CD8-positive, alpha-beta T cell (primary cell): ENCODE measurements at regions of chr16 and their contacts with region 1.

Region 1: DNA sequence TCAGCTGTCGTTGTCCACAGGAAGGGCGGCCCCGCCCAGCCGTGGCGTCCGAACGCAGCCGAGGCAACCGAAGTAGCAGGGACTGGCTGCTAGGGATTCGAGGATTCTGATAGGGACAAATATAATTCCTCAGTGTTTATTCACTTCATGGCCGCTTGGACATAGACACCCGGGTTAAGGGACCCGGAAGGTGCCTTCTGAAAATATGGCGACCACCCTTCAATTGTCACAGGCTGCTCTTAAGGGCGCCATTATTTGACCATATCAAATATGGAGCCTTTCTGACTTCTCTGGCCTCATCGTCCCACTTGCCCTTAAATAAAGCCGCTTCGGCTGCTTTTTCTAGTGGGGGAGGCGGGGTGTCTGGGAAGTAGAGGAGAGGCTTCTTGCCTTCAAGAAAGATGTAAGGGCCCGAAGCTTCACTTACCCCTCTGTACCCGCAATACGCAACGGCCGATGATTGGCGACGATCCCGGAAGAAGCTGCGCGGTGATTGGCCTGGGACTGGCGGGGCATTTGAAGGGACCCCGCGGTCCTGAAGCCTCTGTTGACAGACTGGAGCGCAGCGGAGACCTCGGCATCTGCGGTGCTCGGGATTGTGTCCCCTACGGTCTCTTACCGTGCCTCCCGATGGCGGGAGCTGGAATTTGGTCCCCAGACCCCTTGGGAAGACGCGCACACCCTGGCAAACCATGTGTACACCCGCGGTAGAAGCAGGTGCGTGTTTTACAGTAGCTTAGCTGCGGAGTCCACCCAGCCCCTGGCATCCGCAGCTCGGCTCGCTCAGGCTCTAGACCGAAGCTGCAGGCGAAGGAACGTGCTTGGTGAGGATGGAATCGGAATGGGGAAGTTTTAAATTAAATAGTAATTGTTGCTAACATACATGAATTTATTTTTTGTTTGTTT is at the start of gene ZNF688:
- DNase-seq: peak; percentile 89 to 99 (median 94)
- ATAC-seq: peak; percentile 81
- H3K4me3 ChIP-seq: peak within 1 kb of the TSS; percentile 85 to 86
- H3K4me3 Mint-ChIP-seq: peak within 1 kb of the TSS; percentile 90
- H3K27ac ChIP-seq: peak within 1 kb of the TSS; percentile 84 to 94
- H3K27ac Mint-ChIP-seq: peak within 1 kb of the TSS; percentile 98
- H3K4me1 ChIP-seq: peaks cover 40% of the 10 kb centered on the region
- H3K4me1 Mint-ChIP-seq: peaks cover 34% of the 10 kb centered on the region
- H3K27me3 ChIP-seq: no peaks in the 10 kb centered on the region
- H3K27me3 Mint-ChIP-seq: no peaks in the 10 kb centered on the region
- CTCF ChIP-seq: no peak
- total RNA-seq, gene ZNF688: 6.1 to 7.1 TPM

Region 2: GRCh38 chr16:30065143-30065850 is 506.7 kb before region 1 on chr16 and contains the start of gene ALDOA:
- CTCF ChIA-PET with region 1: no interaction called
- POLR2A ChIA-PET with region 1: no interaction called
- intact Hi-C with region 1: loop called in 1 of 2 experiments (anchors 1 kb)
- DNase-seq: peak; percentile 82 to 97 (median 94)
- ATAC-seq: peak; percentile 82
- H3K4me3 ChIP-seq: peak within 1 kb of the TSS; percentile 94 to 99
- H3K4me3 Mint-ChIP-seq: peak within 1 kb of the TSS; percentile 98
- H3K27ac ChIP-seq: peak within 1 kb of the TSS; percentile 87 to 94
- H3K27ac Mint-ChIP-seq: peak within 1 kb of the TSS; percentile 98
- H3K4me1 ChIP-seq: peaks cover 48% of the 10 kb centered on the region
- H3K4me1 Mint-ChIP-seq: peaks cover 43% of the 10 kb centered on the region
- H3K27me3 ChIP-seq: no peaks in the 10 kb centered on the region
- H3K27me3 Mint-ChIP-seq: no peaks in the 10 kb centered on the region
- CTCF ChIP-seq: no peak
- total RNA-seq, gene ALDOA: 339 to 359 TPM

Region 3: DNA sequence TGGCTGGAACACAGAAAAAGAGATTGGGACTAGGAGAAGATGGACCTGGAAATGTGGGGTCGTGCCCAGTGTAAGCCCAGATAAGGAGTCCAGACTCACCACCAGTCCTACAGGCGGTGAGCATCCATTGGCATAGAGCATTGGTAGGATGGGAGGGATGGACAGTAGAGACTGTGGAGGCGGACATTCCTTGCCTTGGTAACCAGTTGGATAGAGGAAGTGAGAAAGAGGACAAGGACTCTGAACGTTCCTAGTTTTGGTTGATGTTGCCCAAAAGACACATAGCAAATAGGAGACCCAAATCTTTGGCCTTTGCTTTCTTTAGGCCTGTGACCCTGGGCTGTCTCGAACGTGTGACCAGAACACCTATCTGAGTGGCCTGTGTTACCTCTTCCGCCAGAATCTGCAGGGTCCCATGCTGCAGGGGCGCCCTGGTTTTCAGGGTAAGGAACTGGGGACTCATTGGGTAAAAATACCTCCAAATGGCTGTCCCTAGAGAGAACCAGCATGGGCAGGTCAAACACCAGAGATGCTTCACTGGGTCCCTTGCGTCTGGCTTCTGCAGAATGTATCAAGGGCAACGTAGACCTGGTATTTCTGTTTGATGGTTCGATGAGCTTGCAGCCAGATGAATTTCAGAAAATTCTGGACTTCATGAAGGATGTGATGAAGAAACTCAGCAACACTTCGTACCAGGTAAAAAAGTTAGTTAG is 93.0 kb before region 1 on chr16:
- CTCF ChIA-PET with region 1: no interaction called
- POLR2A ChIA-PET with region 1: no interaction called
- intact Hi-C with region 1: no loop called
- DNase-seq: no peak
- ATAC-seq: no peak
- H3K4me3 ChIP-seq: no peak overlapping the region
- H3K4me3 Mint-ChIP-seq: peak overlapping the region; percentile 50
- H3K27ac ChIP-seq: peak overlapping the region in 1 of 2 experiments; percentile 31
- H3K27ac Mint-ChIP-seq: peak overlapping the region; percentile 90
- H3K4me1 ChIP-seq: peaks cover 47% of the 10 kb centered on the region
- H3K4me1 Mint-ChIP-seq: peaks cover 60% of the 10 kb centered on the region
- H3K27me3 ChIP-seq: no peaks in the 10 kb centered on the region
- H3K27me3 Mint-ChIP-seq: no peaks in the 10 kb centered on the region
- CTCF ChIP-seq: no peak

Region 4: DNA sequence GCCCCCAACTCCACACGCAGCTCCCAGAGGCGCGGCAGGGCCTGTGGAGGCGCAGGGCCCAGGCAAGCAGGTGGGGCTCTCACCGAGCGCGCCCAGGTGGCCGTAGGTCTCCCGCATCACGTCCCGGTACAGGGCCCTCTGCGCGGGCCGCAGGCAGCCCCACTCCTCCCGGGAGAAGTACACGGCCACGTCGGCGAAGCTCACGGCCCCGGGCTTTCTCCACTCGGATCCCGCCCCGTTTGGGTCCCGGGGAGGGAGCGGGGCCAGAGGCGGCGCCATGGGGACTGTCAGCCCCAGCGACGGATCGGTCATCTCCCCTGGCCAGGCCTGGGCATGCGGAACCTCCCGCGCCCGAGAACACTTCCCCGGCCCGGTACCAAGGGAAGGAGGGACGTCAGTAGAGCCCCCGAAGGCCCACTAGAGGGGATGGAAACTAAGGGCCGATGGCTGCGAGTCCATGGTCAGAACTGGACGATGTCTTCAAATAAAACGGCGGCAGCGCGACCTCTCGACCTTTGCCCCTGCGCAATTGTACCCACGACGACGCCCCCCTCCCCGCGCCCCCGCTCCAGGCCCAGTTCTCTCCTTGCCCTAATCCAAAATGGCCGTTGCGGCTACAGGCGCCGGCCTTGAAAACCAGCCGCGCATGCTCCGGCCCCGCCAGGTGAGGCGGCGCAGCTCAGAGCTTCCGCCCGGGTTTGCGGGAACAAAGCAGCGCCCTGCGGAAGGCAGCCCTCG is 37.4 kb before region 1 on chr16 and contains the start of gene ZNF747:
- CTCF ChIA-PET with region 1: interaction called, 7 read pairs
- POLR2A ChIA-PET with region 1: interaction called, 32 read pairs
- intact Hi-C with region 1: loop called (anchors 1 kb)
- DNase-seq: peak; percentile 77 to 95 (median 92)
- ATAC-seq: peak; percentile 80
- H3K4me3 ChIP-seq: peak within 1 kb of the TSS; percentile 82 to 96
- H3K4me3 Mint-ChIP-seq: peak within 1 kb of the TSS; percentile 89
- H3K27ac ChIP-seq: peak within 1 kb of the TSS; percentile 77 to 97
- H3K27ac Mint-ChIP-seq: peak within 1 kb of the TSS; percentile 96
- H3K4me1 ChIP-seq: peaks cover 13% of the 10 kb centered on the region
- H3K4me1 Mint-ChIP-seq: peaks cover 38% of the 10 kb centered on the region
- H3K27me3 ChIP-seq: no peaks in the 10 kb centered on the region
- H3K27me3 Mint-ChIP-seq: no peaks in the 10 kb centered on the region
- CTCF ChIP-seq: no peak
- total RNA-seq, gene ZNF747: 6.2 to 6.3 TPM

Region 5: DNA sequence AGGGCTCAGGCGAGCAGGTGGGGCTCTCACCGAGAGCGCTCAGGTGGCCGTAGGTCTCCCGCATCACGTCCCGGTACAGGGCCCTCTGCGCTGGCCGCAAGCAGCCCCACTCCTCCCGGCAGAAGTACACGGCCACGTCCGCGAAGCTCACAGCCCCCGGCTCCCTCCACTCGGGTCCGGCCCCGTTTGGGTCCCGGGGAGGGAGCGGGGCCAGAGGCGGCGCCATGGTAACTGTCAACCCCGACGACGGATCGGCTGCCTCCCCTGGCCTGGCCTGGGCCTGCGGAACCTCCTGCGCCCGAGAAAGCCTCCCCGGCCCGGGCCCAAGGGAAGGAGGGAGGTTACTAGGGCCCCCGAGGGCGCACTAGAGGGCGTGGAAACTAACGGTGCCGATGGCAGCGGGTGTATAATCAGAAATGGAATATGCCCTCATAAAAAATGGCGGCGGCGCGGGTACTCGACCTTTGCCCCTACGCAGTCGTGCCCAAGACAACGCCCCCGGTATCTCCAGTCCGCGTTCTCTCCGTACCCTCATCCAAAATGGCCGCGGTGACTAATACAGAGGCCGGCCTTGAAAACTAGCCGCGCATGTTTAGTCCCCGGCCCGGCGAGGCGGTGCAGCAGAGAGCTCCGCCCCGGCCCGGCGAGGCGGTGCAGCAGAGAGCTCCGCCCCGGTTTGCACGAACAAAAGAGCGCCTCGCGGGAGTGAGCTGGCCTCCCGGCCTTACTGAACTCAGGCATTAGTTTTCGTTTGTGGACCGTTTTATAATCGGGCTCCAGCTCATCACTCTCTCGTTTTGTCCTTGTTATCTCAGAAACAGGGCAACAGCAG is 13.8 kb before region 1 on chr16 and contains the start of gene ZNF764:
- CTCF ChIA-PET with region 1: interaction called, 14 read pairs
- POLR2A ChIA-PET with region 1: interaction called, 57 read pairs
- intact Hi-C with region 1: loop called (anchors 1 kb)
- DNase-seq: peak; percentile 88 to 98 (median 96)
- ATAC-seq: peak; percentile 90
- H3K4me3 ChIP-seq: peak within 1 kb of the TSS; percentile 68 to 84
- H3K4me3 Mint-ChIP-seq: peak within 1 kb of the TSS; percentile 84
- H3K27ac ChIP-seq: peak within 1 kb of the TSS; percentile 80 to 88
- H3K27ac Mint-ChIP-seq: peak within 1 kb of the TSS; percentile 93
- H3K4me1 ChIP-seq: peaks cover 28% of the 10 kb centered on the region
- H3K4me1 Mint-ChIP-seq: peaks cover 35% of the 10 kb centered on the region
- H3K27me3 ChIP-seq: no peaks in the 10 kb centered on the region
- H3K27me3 Mint-ChIP-seq: no peaks in the 10 kb centered on the region
- CTCF ChIP-seq: no peak
- total RNA-seq, gene ZNF764: 15.0 to 15.6 TPM

Region 6: DNA sequence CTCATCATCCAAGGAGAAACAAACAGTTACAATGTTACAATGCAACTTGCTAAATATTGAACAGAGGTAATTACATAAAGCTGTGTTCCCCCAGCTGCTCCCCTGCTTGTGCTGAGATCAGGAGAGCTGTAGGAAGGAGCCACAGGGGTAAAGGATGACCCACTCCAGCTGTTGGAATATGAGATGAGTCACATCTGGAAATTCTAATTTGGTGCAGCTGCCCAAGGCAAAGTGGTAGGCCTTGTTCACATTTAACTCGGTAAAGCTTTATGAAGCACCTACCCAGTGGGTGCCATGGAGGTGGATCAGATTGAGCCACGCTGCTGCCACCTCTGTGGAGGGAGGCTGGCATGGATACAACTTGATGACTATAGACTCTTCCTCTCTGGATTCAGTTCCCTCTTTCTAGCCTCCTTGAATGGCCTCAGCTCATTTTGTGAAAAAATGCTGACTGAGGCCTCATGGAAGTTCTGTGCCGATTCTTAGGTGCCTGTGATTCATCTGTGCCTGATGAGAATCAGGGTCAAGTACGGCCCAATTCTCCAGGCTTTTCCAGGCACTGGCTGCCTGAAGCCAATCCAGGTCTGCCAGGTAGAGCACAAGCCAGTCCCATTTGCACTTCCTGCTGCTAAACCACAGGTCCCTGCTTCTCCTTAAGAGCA is 30.8 kb after region 1 on chr16:
- CTCF ChIA-PET with region 1: interaction called, 5 read pairs
- POLR2A ChIA-PET with region 1: no interaction called
- intact Hi-C with region 1: loop called in 1 of 2 experiments (anchors 1 kb)
- DNase-seq: no peak
- ATAC-seq: no peak
- H3K4me3 ChIP-seq: no peak overlapping the region
- H3K4me3 Mint-ChIP-seq: no peak overlapping the region
- H3K27ac ChIP-seq: no peak overlapping the region
- H3K27ac Mint-ChIP-seq: peak overlapping the region; percentile 52
- H3K4me1 ChIP-seq: no peaks in the 10 kb centered on the region
- H3K4me1 Mint-ChIP-seq: peaks cover 4% of the 10 kb centered on the region
- H3K27me3 ChIP-seq: no peaks in the 10 kb centered on the region
- H3K27me3 Mint-ChIP-seq: no peaks in the 10 kb centered on the region
- CTCF ChIP-seq: no peak

Region 7: DNA sequence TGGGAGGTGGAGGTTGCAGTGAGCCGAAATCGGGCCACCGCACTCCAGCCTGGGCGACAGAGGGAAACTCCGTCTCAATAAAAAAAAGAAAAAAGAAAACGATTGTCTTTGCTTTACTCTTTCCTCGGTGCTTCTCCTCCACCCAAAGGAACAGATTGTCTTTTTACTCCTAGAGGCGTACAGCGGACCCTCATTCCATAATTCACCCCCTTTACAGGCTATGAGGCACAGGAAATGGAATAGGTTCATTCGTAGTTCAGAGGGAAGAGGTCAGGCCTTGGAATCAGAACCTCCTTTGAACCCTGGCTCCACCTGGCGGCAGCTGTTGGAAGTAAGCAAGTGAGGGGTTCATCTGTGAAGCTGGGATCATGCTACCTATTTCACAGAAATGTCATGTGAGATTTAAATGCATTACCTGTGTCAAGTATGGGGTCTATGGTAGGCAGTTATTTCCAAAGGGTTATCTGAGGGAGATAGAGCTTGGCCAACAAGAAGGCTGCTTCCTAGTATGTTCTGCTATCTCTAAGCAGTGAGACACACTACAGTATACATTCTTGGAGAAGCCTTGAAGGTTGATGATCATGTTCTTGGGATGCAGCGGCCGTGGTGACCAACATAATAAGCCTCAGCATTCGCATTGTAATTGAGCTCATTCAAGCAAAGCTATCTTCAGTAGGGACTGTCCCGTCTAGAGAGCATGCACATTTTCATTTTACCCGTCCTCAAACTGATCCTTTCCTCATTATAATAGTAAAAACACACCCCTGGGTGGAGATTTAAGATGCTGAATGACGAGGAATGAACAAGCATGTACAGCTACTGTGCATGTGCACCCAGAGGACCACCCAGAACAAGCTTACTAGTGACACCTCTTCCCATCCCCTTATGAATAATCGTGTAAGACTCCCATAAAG is 56.9 kb after region 1 on chr16:
- CTCF ChIA-PET with region 1: no interaction called
- POLR2A ChIA-PET with region 1: no interaction called
- intact Hi-C with region 1: loop called in 1 of 2 experiments (anchors 2 kb)
- DNase-seq: peak; percentile 77 to 92 (median 84)
- ATAC-seq: peak; percentile 96
- H3K4me3 ChIP-seq: peak overlapping the region in 1 of 2 experiments; percentile 10
- H3K4me3 Mint-ChIP-seq: peak overlapping the region; percentile 79
- H3K27ac ChIP-seq: peak overlapping the region in 1 of 2 experiments; percentile 19
- H3K27ac Mint-ChIP-seq: no peak overlapping the region
- H3K4me1 ChIP-seq: peaks cover 9% of the 10 kb centered on the region
- H3K4me1 Mint-ChIP-seq: peaks cover 5% of the 10 kb centered on the region
- H3K27me3 ChIP-seq: no peaks in the 10 kb centered on the region
- H3K27me3 Mint-ChIP-seq: no peaks in the 10 kb centered on the region
- CTCF ChIP-seq: peak; percentile 85